GM12878 (cell line): ENCODE measurements at regions of chr22 and their contacts with region 1.

Region 1: DNA sequence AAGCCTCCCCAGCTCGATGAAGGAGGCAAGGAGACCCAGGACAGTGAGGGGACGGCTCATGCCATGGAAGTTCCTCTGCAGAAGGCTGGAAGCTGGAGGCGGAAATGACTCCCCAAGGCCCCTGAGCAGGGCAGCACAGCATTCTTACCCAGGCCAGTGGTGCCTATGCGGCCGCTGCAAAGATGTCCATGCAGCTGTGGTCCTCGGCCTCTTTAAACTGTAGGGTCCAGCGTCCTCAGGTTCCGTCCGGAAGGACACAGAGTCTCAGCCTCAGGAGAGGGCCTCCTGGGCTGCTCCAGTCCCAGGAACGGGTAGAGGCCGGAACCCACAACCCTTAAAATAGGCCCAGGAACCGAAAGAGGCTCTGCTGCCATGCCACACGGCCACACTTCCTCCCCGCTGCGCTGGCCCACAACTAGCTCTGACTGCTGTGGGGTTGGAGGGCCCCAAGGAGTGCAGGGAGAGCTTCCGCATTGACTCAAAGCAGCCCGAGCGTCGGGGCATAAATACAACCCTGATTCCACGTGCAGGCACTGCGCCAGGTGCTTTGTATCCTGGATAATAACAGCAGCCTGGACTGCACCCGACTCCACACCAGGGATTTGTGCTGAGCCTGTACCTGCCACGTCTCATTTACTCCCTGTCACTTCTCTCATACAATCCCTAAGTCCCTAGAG is 5.5 kb downstream of the KIAA0930 start:
- DNase-seq: peak; percentile 81
- ATAC-seq: peak; percentile 92
- H3K4me3 ChIP-seq: peak overlapping the region; percentile 67
- H3K27ac ChIP-seq: peak overlapping the region; percentile 93
- H3K4me1 ChIP-seq: peaks cover 62% of the 10 kb centered on the region
- H3K27me3 ChIP-seq: no peaks in the 10 kb centered on the region
- CTCF ChIP-seq: no peak
- EP300 ChIP-seq: peak; percentile 5 to 61; a peak in 2 of 4 replicates
- POLR2A ChIP-seq: peak; percentile 84
- RAD21 ChIP-seq: 0 out of 2 replicates have a peak, but pooled peaks have one; percentile 8

Region 2: DNA sequence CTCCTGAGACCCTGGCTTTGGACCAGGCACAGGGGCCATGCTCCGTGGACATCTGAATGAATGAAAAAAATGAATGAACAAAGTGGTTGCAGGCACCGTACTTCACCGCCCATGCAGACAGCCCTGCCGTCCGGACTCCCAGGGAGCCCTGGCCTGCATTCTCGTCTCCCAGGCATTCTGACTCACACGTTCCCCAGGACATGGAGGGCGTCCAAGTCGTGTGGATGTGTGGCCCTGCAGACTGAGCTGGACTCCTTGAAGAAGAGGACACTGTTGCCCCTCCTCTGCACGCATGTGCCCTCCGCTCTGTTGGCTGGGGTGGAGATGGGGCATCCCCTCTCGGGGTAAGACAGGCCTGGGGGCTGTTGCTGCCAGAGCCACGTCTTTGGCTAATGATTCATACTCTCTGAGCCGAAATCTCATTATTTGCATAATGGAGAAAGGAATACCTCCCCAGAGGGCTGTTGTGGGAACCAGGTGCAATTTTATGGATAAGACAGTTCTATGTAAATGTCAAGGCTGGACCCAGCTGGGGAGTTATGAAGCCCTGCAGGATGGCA is 786.9 kb before region 1 on chr22:
- CTCF ChIA-PET with region 1: no interaction called
- POLR2A ChIA-PET with region 1: no interaction called
- RAD21 ChIA-PET with region 1: no interaction called
- SMC1A ChIA-PET with region 1: no interaction called
- in situ Hi-C with region 1: no loop called
- intact Hi-C with region 1: no loop called
- DNase-seq: no peak
- ATAC-seq: peak; percentile 27; the same call in 2 of the 3 replicates
- H3K4me3 ChIP-seq: no peak overlapping the region
- H3K27ac ChIP-seq: no peak overlapping the region
- H3K4me1 ChIP-seq: 0 out of 2 replicates have a peak, but pooled peaks cover 4% of the 10 kb centered on the region
- H3K27me3 ChIP-seq: no peaks in the 10 kb centered on the region; a peak in 1 of 4 replicates
- CTCF ChIP-seq: no peak
- EP300 ChIP-seq: no peak
- POLR2A ChIP-seq: no peak
- RAD21 ChIP-seq: no peak

Region 3: GRCh38 chr22:45164270-45165088 is 70.8 kb before region 1 on chr22:
- CTCF ChIA-PET with region 1: interaction called, 7 read pairs
- POLR2A ChIA-PET with region 1: interaction called, 16 read pairs
- RAD21 ChIA-PET with region 1: interaction called, 15 read pairs
- SMC1A ChIA-PET with region 1: interaction called, 5 read pairs
- in situ Hi-C with region 1: no loop called
- intact Hi-C with region 1: loop called (anchors 5 kb)
- DNase-seq: no peak
- ATAC-seq: peak; percentile 52
- H3K4me3 ChIP-seq: peak overlapping the region; percentile 97
- H3K27ac ChIP-seq: peak overlapping the region; percentile 78
- H3K4me1 ChIP-seq: peaks cover 9% of the 10 kb centered on the region
- H3K27me3 ChIP-seq: no peaks in the 10 kb centered on the region
- CTCF ChIP-seq: no peak
- EP300 ChIP-seq: no peak
- POLR2A ChIP-seq: no peak
- RAD21 ChIP-seq: no peak

Region 4: DNA sequence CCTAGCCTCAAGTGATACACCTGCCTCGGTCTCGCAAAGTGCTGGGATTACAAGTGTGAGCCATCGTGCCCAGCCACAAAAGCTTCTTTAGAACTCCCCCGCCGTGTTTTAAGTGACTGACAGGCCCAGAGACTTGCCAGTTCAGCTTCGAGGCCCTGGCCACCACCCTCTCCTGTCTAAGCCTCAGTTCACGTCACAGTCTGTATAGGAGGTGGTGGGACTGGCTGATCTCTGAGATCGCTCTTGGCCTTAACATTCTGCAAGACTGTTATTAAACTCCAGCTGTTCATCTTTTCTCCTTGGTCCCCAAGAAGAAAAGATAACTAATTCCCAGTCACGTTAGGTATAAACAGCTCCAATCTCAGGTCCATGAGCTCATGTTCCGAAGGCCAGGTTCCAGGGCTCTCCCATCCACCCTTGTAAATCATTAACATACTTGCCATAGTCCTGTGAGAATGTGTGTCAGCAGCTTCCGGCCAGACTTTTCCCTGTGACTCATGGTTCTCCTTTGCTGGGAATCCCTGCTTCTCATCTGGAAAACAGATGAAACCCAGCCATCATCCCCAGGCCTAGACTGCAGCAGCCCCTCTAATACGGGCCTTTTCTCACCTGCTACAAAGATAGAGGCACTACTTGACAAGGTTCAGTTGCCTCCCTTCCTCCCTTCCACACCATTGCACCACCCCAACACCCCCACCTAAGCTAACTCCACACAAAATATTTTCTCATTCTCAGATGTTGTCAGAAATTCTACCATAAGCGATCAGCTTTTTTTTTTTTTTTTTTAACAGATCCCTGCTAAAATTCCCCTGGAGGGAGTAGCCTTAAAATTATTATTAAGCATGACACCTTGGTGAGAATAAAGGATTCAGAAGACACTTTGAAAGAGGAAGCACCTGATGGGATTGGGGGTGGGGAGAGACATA is 11.1 kb after region 1 on chr22:
- CTCF ChIA-PET with region 1: interaction called, 8 read pairs
- POLR2A ChIA-PET with region 1: interaction called, 11 read pairs
- RAD21 ChIA-PET with region 1: interaction called, 22 read pairs
- SMC1A ChIA-PET with region 1: interaction called, 19 read pairs
- in situ Hi-C with region 1: no loop called
- intact Hi-C with region 1: no loop called
- DNase-seq: no peak
- ATAC-seq: peak; percentile 27; the same call in 2 of the 3 replicates
- H3K4me3 ChIP-seq: no peak overlapping the region
- H3K27ac ChIP-seq: peak overlapping the region; percentile 75
- H3K4me1 ChIP-seq: peaks cover 42% of the 10 kb centered on the region
- H3K27me3 ChIP-seq: no peaks in the 10 kb centered on the region
- CTCF ChIP-seq: no peak
- EP300 ChIP-seq: no peak
- POLR2A ChIP-seq: no peak
- RAD21 ChIP-seq: no peak